ENCODE measurements at regions of chr2 and their contacts with region 1.

Region 1: GRCh38 chr2:227471924-227472264 is at the start of gene AGFG1:
- DNase-seq: peak; percentile 91
- ATAC-seq: peak; percentile 82
- H3K4me3 Mint-ChIP-seq: peak within 1 kb of the TSS; percentile 94
- H3K27ac Mint-ChIP-seq: peak within 1 kb of the TSS; percentile 87
- H3K4me1 Mint-ChIP-seq: peaks cover 48% of the 10 kb centered on the region
- H3K27me3 Mint-ChIP-seq: no peaks in the 10 kb centered on the region
- total RNA-seq, gene AGFG1: 158 to 214 TPM

Region 2: GRCh38 chr2:227488045-227488444 is 16.2 kb after region 1 on chr2:
- CTCF ChIA-PET with region 1: interaction called, 6 read pairs
- POLR2A ChIA-PET with region 1: no interaction called
- intact Hi-C with region 1: loop called in 1 of 2 experiments (anchors 2 kb)
- DNase-seq: no peak
- ATAC-seq: peak; percentile 65
- H3K4me3 Mint-ChIP-seq: no peak overlapping the region
- H3K27ac Mint-ChIP-seq: peak overlapping the region; percentile 40
- H3K4me1 Mint-ChIP-seq: peaks cover 64% of the 10 kb centered on the region
- H3K27me3 Mint-ChIP-seq: no peaks in the 10 kb centered on the region

Measured in activated CD4-positive, alpha-beta T cell treated with anti-CD3 and anti-CD28 coated beads for 36 hours (primary cell).